GM10248 (cell line): ENCODE measurements at regions of chr17 and their contacts with region 1.

Region 1: DNA sequence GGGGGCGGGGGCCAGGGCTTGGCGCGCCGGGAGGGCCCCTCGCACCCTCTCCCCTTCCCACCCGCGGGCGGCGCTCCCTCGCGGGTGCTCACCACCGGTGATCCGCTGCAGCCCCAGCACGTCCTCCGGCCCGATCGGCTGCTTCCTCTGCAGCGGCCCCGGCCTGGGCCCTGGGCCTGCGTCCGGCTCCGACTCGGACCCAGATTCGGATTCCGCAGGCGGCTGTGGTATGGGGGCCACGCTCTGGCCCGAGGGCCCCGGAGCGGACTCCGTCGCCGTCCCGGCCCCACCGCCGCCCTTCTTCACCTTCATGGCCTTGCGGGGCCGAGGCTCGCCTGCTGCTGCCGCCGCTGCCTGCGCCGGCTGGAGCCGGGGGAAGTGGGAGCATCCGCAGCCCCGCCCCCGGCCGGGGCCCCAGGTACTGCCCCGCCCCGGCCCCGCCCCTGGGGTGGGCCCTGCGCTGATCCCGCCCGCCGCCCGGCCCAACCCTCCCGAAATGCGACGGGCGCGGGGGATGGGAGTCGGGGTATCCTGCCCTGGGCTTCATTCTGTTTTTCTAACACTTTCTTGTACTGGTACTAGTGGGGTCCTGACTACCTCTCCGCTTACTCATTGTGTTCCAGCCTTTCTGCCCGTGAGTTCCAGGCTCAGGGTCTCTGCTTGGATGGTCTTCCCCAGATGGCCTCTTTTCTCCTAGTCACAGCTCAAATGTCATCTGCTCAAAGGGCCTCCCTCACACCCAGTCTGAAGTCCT is at the start of gene UNC119:
- DNase-seq: peak; percentile 94
- CTCF ChIP-seq: no peak

Region 2: DNA sequence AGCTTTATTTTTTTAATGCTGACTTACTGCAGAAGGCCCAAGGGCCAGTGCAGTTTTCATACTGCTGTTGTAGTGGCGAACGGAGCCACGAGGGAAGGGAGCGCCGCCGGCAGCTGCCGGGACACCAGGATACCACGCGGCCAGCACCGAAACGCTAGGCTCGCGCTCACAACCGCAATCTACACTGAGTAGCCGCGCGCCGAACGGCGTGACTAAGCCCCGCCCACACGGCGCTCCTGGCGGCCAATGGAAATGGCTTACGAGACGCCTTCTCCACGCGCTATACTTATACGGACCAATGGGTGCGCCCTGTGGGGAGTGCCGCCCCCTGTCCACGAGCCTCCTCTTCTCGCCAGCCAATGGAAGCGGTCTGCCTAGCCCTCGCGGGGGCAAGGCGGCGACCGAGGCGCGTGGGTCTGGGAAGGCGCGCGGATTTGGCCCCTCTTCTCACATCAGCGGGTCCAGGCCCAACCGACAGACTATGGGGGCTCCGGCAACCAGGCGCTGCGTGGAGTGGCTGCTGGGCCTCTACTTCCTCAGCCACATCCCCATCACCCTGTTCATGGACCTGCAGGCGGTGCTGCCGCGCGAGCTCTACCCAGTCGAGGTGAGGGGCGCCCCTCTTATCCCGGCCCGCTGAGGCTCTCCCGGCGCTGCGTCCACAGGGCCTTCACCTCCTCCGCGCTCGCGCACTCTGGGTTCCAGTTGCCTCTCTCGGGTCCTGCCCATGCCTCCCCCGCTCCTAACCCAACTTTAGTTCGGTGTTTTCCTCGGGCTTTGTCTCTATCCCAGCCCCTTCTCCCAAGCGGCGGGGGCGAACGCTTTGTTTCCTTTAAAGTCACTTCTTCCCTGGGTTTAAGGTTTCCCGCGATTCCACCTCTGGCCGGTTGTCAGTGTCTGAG is 233.4 kb before region 1 on chr17 and contains the start of gene TMEM97:
- CTCF ChIA-PET with region 1: no interaction called
- POLR2A ChIA-PET with region 1: no interaction called
- DNase-seq: peak; percentile 98
- CTCF ChIP-seq: no peak

Region 3: DNA sequence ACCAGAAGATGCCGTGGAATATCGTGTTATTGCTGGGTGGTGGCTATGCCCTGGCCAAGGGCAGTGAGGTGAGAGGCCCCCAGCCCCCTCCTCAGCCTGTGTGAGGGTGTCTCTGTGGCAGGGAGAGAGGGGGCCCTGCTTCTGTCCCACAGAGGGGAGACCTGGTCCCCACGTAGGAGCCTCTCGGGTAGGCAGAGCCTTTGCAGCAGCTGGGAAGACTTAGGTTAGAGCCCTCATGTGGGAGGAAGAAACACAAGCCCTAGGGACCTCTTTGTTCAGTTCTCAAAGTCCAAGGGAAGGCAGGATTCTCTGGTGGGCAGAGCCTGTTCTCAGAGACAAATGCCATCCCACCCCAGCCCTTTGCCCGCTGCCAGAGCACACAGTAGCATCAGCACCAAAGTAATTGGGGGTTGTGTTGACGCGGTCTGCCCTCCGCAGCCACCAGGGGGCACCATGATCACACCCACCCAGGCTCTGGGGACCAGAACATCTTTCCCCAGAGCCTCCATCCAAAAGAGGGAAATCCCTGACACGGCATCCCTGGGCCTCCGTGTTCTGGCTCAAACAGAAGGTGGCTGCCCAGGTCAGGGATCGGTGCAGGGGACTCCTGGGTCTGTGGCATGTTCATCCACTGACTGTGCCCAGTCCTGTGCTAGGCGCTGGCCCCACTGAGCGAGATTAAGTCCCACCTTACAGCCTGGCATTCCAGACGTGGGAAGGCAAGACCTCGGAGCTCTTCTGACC is 57.8 kb before region 1 on chr17:
- CTCF ChIA-PET with region 1: interaction called, 48 read pairs
- POLR2A ChIA-PET with region 1: no interaction called
- DNase-seq: peak; percentile 92
- CTCF ChIP-seq: peak; percentile 87

Region 4: DNA sequence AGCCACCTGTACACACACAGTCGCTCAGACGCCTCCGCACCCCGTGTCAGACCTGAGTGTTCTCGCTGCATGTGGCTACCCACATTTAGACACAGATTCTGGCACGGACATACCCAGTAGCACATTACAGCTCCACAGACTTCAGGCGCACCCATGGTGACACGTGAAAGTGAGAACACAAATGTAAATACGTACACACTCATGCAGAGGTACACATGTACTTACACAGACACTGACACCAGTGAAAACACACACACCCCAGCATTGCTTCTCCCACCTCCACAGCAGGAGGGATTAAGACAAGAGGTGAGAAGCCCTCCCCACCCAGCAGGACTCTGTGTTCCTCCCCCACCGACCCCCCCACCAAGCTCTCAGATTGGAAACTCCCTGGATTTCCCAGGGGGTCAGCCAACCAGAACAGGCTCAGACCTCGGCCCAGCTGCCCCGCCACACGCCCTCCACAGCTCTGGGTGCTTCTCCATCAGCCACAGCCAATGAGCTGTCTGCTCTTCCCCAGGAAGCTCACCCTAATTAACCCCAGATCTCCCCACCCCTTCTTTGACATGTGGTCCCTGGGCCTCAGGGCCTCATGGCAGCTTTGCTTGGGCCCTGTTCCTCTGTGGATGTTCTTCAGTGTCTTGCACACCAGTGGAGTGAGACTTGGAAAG is 51.6 kb before region 1 on chr17:
- CTCF ChIA-PET with region 1: interaction called, 48 read pairs
- POLR2A ChIA-PET with region 1: interaction called, 4 read pairs
- DNase-seq: peak; percentile 80
- CTCF ChIP-seq: no peak

Region 5: GRCh38 chr17:28524476-28525368 is 27.7 kb before region 1 on chr17:
- CTCF ChIA-PET with region 1: interaction called, 15 read pairs
- POLR2A ChIA-PET with region 1: no interaction called
- DNase-seq: no peak
- CTCF ChIP-seq: no peak

Region 6: GRCh38 chr17:28540231-28540630 is 12.2 kb before region 1 on chr17:
- CTCF ChIA-PET with region 1: interaction called, 83 read pairs
- POLR2A ChIA-PET with region 1: no interaction called
- DNase-seq: no peak
- CTCF ChIP-seq: no peak

Region 7: GRCh38 chr17:28571255-28572122 is 19.1 kb after region 1 on chr17 and contains the start of gene PIGS:
- CTCF ChIA-PET with region 1: interaction called, 18 read pairs
- POLR2A ChIA-PET with region 1: interaction called, 3 read pairs
- DNase-seq: peak; percentile 96
- CTCF ChIP-seq: no peak

Region 8: DNA sequence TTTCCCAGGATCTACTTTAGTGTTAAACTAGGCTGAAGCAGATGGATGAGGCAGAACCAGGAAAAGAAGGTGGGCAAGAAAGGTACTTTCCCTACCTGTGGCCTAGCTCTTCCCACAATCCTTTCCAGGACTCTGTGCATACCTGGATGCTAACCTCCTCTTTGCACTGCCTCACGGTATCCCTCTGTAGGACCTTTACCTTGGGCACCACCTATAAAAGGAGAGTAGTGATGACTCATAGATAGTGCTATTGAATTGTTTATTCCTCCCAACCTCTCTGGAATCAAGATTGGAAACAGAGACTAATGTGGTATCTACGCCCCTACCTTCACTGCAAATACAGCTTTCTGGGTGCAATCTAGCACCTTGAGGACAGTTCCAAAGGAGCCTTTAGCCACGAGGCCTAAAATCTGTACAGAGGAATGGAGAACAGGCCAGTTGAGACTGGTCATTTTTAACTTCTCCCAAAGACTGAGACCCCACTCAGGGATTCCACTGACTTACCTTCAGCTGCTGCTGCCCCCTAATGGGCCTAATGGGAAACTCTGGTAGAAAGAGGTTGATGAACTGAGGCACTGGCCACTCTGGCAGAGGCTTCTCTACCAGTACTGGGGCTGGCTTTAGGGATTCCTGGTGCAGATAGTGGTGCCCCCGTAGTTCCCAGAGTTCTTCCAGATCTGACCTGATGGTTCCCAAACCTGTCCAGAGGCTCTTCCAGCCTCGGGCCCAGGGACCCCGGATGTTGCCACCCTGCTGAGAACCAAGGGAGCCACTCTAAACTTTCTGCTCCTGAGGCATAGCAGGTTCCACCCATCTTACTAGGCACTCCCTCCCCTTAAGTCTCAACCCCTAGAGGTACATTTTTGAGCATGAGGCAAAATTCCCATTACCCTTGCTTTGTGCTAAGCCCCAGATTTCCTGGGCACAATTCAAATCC is 60.8 kb after region 1 on chr17:
- CTCF ChIA-PET with region 1: interaction called, 12 read pairs
- POLR2A ChIA-PET with region 1: no interaction called
- DNase-seq: peak; percentile 39
- CTCF ChIP-seq: peak; percentile 70

Region 9: GRCh38 chr17:28871056-28871579 is 318.7 kb after region 1 on chr17:
- CTCF ChIA-PET with region 1: no interaction called
- POLR2A ChIA-PET with region 1: no interaction called
- DNase-seq: peak; percentile 85
- CTCF ChIP-seq: no peak